RWPE1 (cell line): ENCODE measurements at regions of chr19 and their contacts with region 1.

Region 1: DNA sequence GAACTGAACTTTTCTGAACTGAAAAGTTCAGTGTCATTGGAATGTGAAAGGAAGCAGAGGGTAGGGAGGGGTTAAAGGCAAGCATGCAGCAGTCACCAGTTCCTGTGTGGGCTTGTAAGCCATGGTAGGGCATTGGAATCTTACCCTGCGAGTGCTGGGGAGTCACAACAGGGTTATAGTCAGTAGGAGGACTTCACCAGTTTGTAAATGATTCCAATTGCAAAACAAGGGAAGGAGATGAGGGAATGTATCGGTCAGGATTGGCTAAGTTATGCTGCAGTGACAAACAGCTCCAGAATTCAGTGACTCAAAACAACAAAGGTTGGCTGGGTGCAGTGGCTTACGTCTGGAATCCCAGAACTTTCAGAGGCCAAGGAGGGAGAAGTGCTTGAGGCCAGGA is 12.8 kb downstream of the LYPD3 start:
- DNase-seq: peak; percentile 55
- H3K27ac ChIP-seq: no peak overlapping the region
- CTCF ChIP-seq: no peak

Region 2: DNA sequence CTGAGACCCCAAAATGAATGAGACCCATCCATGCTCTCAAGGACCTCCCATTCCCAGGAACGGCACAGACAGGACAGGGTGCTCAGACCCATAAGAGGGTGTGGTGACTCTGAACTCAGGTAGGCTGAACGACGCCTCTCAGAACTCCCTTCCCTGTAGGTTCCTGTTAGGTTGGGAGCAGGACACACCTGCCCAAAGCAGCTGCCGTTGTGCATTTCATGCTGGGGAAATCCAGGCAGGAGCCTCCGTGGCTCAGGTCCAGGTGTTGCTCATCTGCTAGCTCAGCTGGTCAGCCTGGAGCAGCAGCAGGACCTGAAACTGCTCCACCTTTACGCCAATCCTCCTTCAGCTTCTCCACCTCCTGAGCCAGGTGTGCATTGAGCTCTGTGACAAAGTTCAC is 57.0 kb before region 1 on chr19:
- CTCF ChIA-PET with region 1: no interaction called
- POLR2A ChIA-PET with region 1: no interaction called
- DNase-seq: no peak
- H3K27ac ChIP-seq: no peak overlapping the region
- CTCF ChIP-seq: no peak

Region 3: GRCh38 chr19:43527860-43528622 is 75.5 kb after region 1 on chr19:
- CTCF ChIA-PET with region 1: interaction called, 4 read pairs
- POLR2A ChIA-PET with region 1: interaction called, 10 read pairs
- DNase-seq: no peak
- H3K27ac ChIP-seq: peak overlapping the region; percentile 94
- CTCF ChIP-seq: no peak